HEK293 (cell line): ENCODE measurements at regions of chr19 and their contacts with region 1.

Region 1: DNA sequence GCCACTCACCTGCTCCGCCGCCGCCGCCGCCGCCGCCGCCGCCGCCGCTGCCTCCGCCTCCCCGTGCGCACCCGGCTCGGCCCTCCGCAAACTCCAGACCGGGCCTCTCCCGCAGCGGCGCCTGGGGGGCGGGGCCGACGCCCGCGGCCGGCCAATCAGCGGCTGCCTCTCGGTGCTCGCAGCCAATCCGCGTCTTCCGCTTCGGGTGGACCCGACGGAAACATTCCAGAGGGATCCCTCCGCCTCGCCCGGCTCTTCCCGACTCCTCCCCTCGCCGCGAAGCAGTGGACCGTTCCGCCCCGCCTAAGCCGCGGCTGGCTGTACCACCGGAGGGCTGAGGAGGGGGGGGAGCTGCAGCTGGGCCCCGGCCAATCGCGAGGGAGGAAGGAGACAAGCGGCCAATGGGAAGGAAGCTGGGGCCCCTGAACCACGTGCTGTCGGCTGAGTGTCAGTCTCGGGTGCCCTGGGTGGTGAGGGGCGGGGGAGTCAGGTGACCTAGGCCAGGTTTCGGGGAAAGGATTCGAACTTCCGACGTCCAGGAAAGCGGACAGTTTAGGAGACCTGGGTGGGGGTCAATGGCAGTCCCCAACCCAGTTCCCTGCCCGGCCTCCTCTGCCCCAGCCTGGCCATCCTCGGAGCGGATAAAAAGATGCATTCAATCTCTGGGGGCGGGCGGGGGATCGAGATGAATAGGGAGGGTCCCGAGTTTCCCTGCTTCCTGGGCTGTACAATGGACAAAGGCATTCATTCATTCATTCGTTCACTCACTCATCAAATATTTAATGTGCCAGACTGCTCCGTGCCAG is at the start of gene GIPC1:
- H3K4me3 ChIP-seq: peak within 1 kb of the TSS; percentile 69
- H3K27ac ChIP-seq: peak within 1 kb of the TSS; percentile 60; the same call in 1 of the 2 replicates
- H3K4me1 ChIP-seq: no peaks in the 10 kb centered on the region
- CTCF ChIP-seq: no peak

Region 2: DNA sequence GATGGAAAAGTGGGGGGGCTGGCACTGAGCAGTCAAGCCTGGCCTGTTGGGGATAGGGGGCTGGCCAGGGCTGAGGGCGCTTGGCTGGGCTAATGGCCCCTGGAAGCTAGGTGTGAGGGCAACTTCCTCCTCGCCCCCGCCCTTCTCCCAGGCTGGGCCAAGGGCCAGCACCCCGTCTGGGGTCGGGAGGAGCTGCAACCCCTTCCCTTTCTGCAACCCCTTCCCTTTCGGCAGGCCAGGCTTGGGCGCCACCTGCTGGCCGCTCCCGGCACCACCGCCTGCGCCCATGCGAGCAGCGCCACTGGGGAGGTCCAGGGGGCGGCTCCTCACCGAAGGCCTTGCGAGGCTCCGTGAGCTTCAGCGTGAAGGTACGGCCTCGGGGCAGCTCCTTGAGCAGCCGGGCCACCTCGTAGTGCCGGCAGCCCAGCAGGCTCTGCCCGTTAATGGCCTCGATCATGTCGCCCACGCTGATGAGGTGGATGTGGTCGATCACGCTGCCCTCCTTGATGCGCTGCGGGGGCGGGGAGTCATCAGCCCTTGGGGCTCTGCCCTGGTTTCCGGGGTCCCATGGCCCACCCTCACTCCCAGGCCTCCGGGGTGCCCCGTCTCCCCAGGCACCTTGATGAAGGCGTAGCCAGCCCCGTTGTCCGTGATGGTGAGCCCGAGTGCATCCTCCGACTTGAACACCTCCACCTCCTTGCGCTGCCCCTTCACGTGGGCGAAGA is 16.1 kb before region 1 on chr19:
- CTCF ChIA-PET with region 1: interaction called, 23 read pairs
- POLR2A ChIA-PET with region 1: interaction called, 4 read pairs
- H3K4me3 ChIP-seq: no peak overlapping the region
- H3K27ac ChIP-seq: no peak overlapping the region
- H3K4me1 ChIP-seq: no peaks in the 10 kb centered on the region; the same call in 1 of the 2 replicates
- CTCF ChIP-seq: peak; percentile 96